ENCODE measurements at regions of chr3 and their contacts with region 1.

Region 1: DNA sequence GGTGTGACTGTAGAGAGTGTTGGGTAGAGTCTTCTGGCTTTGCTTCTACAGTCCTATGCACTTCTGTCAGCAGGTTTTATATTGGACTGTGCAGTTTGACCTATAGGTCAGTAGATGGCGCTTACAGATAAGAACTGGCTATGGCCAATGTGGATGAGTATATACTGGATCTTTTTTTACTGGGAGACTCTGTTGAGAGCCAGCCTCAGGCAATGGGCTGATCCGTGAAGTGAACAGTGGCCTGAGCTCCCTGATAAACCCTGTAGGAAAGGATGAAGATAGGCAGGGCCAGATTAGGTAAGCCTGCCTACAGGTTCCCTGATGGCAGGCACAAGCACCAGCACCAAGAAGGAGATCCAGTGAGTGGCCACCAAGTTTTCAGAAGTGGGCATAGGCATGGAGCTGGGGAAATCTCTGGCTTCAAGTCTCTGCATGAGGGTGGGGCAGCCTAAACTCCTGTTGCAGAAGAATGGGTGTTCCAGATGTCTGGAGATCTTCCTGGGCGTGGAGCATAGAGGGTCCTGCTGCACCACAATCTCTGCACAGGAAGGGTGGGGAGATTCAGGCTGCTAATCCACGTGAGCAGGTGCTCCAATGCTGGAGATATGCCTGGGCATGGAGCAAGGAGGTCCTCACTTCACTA is 326.0 kb upstream of the SGO1 start:
- DNase-seq: peak; percentile 62
- H3K4me3 Mint-ChIP-seq: no peak overlapping the region
- H3K27ac Mint-ChIP-seq: no peak overlapping the region
- H3K4me1 Mint-ChIP-seq: peaks cover 5% of the 10 kb centered on the region
- H3K27me3 Mint-ChIP-seq: no peaks in the 10 kb centered on the region
- CTCF ChIP-seq: peak; percentile 76

Region 2: GRCh38 chr3:20340324-20340928 is 171.6 kb before region 1 on chr3:
- CTCF ChIA-PET with region 1: interaction called, 3 read pairs
- POLR2A ChIA-PET with region 1: no interaction called
- intact Hi-C with region 1: loop called (anchors 2 kb)
- DNase-seq: peak; percentile 81
- H3K4me3 Mint-ChIP-seq: no peak overlapping the region
- H3K27ac Mint-ChIP-seq: no peak overlapping the region
- H3K4me1 Mint-ChIP-seq: no peaks in the 10 kb centered on the region
- H3K27me3 Mint-ChIP-seq: no peaks in the 10 kb centered on the region
- CTCF ChIP-seq: peak; percentile 91

Region 3: DNA sequence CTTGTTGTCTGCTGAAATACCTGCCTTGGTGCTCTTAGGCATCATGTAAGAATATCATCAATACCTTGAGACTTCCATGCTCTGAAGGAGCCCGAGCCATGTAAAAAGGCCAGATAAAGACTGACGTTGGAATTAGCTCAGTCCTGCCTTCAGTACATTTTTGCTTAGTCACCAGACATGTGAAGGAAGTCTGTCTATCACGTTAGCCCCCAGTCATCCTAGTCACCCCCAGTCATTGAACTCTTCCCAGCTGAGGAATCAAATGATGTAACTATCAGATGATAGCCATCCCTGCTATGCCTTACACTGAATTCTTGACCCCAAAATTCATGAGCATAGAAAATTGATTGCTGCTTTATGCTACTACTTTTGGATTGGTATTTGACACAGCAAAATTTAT is 25.2 kb after region 1 on chr3:
- CTCF ChIA-PET with region 1: no interaction called
- POLR2A ChIA-PET with region 1: no interaction called
- intact Hi-C with region 1: no loop called
- DNase-seq: no peak
- H3K4me3 Mint-ChIP-seq: no peak overlapping the region
- H3K27ac Mint-ChIP-seq: no peak overlapping the region
- H3K4me1 Mint-ChIP-seq: no peaks in the 10 kb centered on the region
- H3K27me3 Mint-ChIP-seq: no peaks in the 10 kb centered on the region
- CTCF ChIP-seq: no peak

Region 4: DNA sequence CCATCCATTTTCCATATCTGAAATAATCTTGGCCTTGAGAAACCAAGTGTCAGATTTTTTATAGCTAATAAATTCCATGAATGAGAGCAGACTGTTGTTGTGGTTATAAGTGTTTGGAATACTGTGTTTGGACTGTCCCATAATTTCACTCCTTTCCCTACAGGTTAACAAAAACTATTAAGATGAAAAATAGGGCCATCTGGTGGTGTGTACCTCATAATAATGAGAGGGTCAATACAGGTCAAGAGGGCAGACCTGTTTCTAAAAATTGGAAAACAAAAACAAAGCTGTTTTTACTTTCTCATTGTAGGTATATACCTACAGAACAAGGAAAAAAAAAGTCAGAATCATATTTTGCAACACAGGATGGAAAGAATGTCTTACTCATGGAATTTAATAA is 227.8 kb after region 1 on chr3:
- CTCF ChIA-PET with region 1: interaction called, 5 read pairs
- POLR2A ChIA-PET with region 1: no interaction called
- intact Hi-C with region 1: loop called (anchors 1 kb)
- DNase-seq: no peak
- H3K4me3 Mint-ChIP-seq: no peak overlapping the region
- H3K27ac Mint-ChIP-seq: no peak overlapping the region
- H3K4me1 Mint-ChIP-seq: no peaks in the 10 kb centered on the region
- H3K27me3 Mint-ChIP-seq: no peaks in the 10 kb centered on the region
- CTCF ChIP-seq: no peak

Region 5: GRCh38 chr3:21216598-21216997 is 704.6 kb after region 1 on chr3:
- CTCF ChIA-PET with region 1: interaction called, 9 read pairs
- POLR2A ChIA-PET with region 1: no interaction called
- intact Hi-C with region 1: loop called (anchors 1 kb)
- DNase-seq: peak; percentile 40
- H3K4me3 Mint-ChIP-seq: no peak overlapping the region
- H3K27ac Mint-ChIP-seq: no peak overlapping the region
- H3K4me1 Mint-ChIP-seq: no peaks in the 10 kb centered on the region
- H3K27me3 Mint-ChIP-seq: no peaks in the 10 kb centered on the region
- CTCF ChIP-seq: peak; percentile 42

Region 6: GRCh38 chr3:22117751-22118346 is 1605.9 kb after region 1 on chr3:
- CTCF ChIA-PET with region 1: interaction called, 4 read pairs
- POLR2A ChIA-PET with region 1: no interaction called
- intact Hi-C with region 1: loop called (anchors 5 kb)
- DNase-seq: peak; percentile 56
- H3K4me3 Mint-ChIP-seq: no peak overlapping the region
- H3K27ac Mint-ChIP-seq: no peak overlapping the region
- H3K4me1 Mint-ChIP-seq: peaks cover 17% of the 10 kb centered on the region
- H3K27me3 Mint-ChIP-seq: no peaks in the 10 kb centered on the region
- CTCF ChIP-seq: peak; percentile 51

Measured in MCF 10A (cell line).